ENCODE measurements at regions of chr11 and their contacts with region 1.

Region 1: DNA sequence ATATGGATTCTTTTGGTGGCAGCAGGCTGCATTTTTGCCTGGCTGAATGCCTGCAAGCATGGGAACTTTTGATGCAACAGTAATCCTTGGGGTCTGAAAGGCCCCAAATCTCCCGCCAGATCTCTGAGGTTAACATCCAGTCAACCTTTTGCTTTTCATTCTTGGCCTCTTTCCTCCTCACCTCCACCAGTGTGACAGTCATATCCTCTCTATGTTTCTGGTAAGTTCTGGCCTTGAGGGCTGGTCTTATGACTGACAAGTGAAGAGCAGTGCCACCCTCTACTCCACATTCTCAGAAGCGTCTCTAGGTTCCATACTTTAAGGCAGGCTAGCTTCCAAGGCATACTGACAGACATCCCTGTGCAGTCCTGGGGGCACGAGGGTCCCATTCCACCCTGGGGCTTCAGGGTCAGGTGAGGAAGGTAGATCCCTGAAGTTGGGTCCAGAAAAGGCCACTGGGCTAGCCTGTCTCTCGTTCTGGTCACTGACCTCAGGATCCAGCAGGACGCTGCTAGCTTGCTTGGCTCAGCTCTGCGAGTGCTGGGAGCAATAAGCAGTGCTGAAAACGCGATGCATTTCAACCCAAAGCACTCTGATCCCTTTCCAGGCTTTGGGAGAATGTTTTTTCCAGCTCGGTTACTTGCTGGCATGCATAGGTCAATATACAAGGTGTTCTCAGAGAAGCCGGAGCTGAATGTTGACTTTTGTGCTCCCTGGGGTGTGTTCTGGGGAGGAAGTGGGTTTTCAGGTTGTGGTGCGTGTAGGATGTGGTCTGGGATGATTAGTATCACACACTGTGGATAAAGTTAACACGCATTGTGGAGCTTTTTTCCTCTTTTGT is 75.2 kb downstream of the PTPRJ start:
- DNase-seq: peak; percentile 16 to 88 (median 52)
- ATAC-seq: peak; percentile 81
- H3K4me3 ChIP-seq: peak overlapping the region; percentile 36
- H3K4me3 Mint-ChIP-seq: peak overlapping the region; percentile 74
- H3K27ac ChIP-seq: peak overlapping the region in 1 of 2 donors; percentile 33
- H3K27ac Mint-ChIP-seq: peak overlapping the region; percentile 88
- H3K4me1 ChIP-seq: peaks cover 86% of the 10 kb centered on the region
- H3K4me1 Mint-ChIP-seq: peaks cover 91% of the 10 kb centered on the region
- H3K27me3 ChIP-seq: no peaks in the 10 kb centered on the region
- H3K27me3 Mint-ChIP-seq: no peaks in the 10 kb centered on the region
- CTCF ChIP-seq: no peak

Region 2: GRCh38 chr11:47932544-47932943 is 123.0 kb before region 1 on chr11:
- CTCF ChIA-PET with region 1: interaction called, 10 read pairs
- POLR2A ChIA-PET with region 1: interaction called, 10 read pairs
- intact Hi-C with region 1: loop called in 1 of 2 experiments (anchors 1 kb)
- DNase-seq: no peak
- ATAC-seq: no peak
- H3K4me3 ChIP-seq: no peak overlapping the region
- H3K4me3 Mint-ChIP-seq: no peak overlapping the region
- H3K27ac ChIP-seq: no peak overlapping the region
- H3K27ac Mint-ChIP-seq: no peak overlapping the region
- H3K4me1 ChIP-seq: peaks cover 12% of the 10 kb centered on the region
- H3K4me1 Mint-ChIP-seq: peaks cover 23% of the 10 kb centered on the region
- H3K27me3 ChIP-seq: no peaks in the 10 kb centered on the region
- H3K27me3 Mint-ChIP-seq: no peaks in the 10 kb centered on the region
- CTCF ChIP-seq: no peak

Region 3: GRCh38 chr11:47991266-47991830 is 64.2 kb before region 1 on chr11:
- CTCF ChIA-PET with region 1: no interaction called
- POLR2A ChIA-PET with region 1: interaction called, 10 read pairs
- intact Hi-C with region 1: no loop called
- DNase-seq: peak in 4 of 14 experiments; percentile 48 to 54 (median 52)
- ATAC-seq: peak; percentile 74
- H3K4me3 ChIP-seq: no peak overlapping the region
- H3K4me3 Mint-ChIP-seq: peak overlapping the region; percentile 46
- H3K27ac ChIP-seq: no peak overlapping the region
- H3K27ac Mint-ChIP-seq: peak overlapping the region; percentile 70
- H3K4me1 ChIP-seq: peaks cover 31% of the 10 kb centered on the region
- H3K4me1 Mint-ChIP-seq: peaks cover 68% of the 10 kb centered on the region
- H3K27me3 ChIP-seq: no peaks in the 10 kb centered on the region
- H3K27me3 Mint-ChIP-seq: no peaks in the 10 kb centered on the region
- CTCF ChIP-seq: no peak

Region 4: GRCh38 chr11:48013269-48013901 is 42.1 kb before region 1 on chr11:
- CTCF ChIA-PET with region 1: interaction called, 7 read pairs
- POLR2A ChIA-PET with region 1: interaction called, 29 read pairs
- intact Hi-C with region 1: loop called in 1 of 2 experiments (anchors 5 kb)
- DNase-seq: peak in 12 of 14 experiments; percentile 33 to 80 (median 50)
- ATAC-seq: peak; percentile 56
- H3K4me3 ChIP-seq: no peak overlapping the region
- H3K4me3 Mint-ChIP-seq: peak overlapping the region; percentile 79
- H3K27ac ChIP-seq: peak overlapping the region; percentile 61 to 88
- H3K27ac Mint-ChIP-seq: peak overlapping the region; percentile 97
- H3K4me1 ChIP-seq: peaks cover 100% of the 10 kb centered on the region
- H3K4me1 Mint-ChIP-seq: peaks cover 85% of the 10 kb centered on the region
- H3K27me3 ChIP-seq: no peaks in the 10 kb centered on the region
- H3K27me3 Mint-ChIP-seq: no peaks in the 10 kb centered on the region
- CTCF ChIP-seq: no peak

Region 5: DNA sequence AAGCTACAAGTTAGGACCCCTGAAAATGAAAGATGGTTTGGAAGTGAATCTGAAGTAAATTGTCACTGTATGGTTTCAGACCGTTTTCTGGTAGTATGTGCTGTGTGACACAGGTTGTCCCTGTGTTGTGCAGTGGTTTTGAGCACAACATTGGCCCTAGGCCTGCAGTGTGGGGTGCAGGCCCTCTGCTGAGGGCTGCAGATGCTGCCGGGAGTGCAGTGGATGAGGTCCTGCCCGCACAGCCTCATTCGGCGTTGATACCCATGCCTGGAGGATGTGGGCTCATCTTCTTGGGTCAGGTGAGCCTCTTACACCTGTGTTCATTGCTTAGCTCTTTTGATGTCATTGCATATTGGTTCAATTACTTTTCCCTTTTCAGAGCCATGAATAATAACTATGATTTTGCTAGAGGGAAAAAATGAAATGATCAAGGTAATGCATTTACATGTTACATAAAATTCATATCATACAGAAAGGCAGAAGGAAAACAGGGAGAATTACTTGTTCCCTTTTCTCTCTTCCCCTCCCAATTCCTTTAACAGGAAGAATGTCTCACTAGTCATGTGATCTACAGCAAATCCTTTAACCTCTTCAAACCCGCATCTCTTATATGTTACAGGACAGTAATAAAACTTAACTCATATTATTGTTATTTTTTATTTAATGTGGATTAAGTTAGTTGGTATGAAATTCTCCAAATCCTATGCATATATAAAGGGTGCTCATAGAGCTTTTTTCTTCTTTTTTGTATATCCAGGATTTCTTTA is 26.4 kb before region 1 on chr11:
- CTCF ChIA-PET with region 1: no interaction called
- POLR2A ChIA-PET with region 1: interaction called, 20 read pairs
- intact Hi-C with region 1: no loop called
- DNase-seq: peak in 6 of 14 experiments; percentile 26 to 78 (median 42)
- ATAC-seq: peak; percentile 82
- H3K4me3 ChIP-seq: no peak overlapping the region
- H3K4me3 Mint-ChIP-seq: no peak overlapping the region
- H3K27ac ChIP-seq: peak overlapping the region in 1 of 2 donors; percentile 22
- H3K27ac Mint-ChIP-seq: peak overlapping the region; percentile 83
- H3K4me1 ChIP-seq: peaks cover 35% of the 10 kb centered on the region
- H3K4me1 Mint-ChIP-seq: peaks cover 65% of the 10 kb centered on the region
- H3K27me3 ChIP-seq: no peaks in the 10 kb centered on the region
- H3K27me3 Mint-ChIP-seq: no peaks in the 10 kb centered on the region
- CTCF ChIP-seq: no peak

Region 6: GRCh38 chr11:48043111-48043990 is 12.2 kb before region 1 on chr11:
- CTCF ChIA-PET with region 1: interaction called, 5 read pairs
- POLR2A ChIA-PET with region 1: interaction called, 28 read pairs
- intact Hi-C with region 1: no loop called
- DNase-seq: peak in 2 of 14 experiments; percentile 7 to 50
- ATAC-seq: peak; percentile 77
- H3K4me3 ChIP-seq: no peak overlapping the region
- H3K4me3 Mint-ChIP-seq: peak overlapping the region; percentile 52
- H3K27ac ChIP-seq: no peak overlapping the region
- H3K27ac Mint-ChIP-seq: peak overlapping the region; percentile 84
- H3K4me1 ChIP-seq: peaks cover 29% of the 10 kb centered on the region
- H3K4me1 Mint-ChIP-seq: peaks cover 73% of the 10 kb centered on the region
- H3K27me3 ChIP-seq: no peaks in the 10 kb centered on the region
- H3K27me3 Mint-ChIP-seq: no peaks in the 10 kb centered on the region
- CTCF ChIP-seq: no peak

Region 7: GRCh38 chr11:48103621-48104562 is 48.4 kb after region 1 on chr11:
- CTCF ChIA-PET with region 1: interaction called, 6 read pairs
- POLR2A ChIA-PET with region 1: interaction called, 38 read pairs
- intact Hi-C with region 1: loop called (anchors 2 to 5 kb)
- DNase-seq: no peak
- ATAC-seq: no peak
- H3K4me3 ChIP-seq: no peak overlapping the region
- H3K4me3 Mint-ChIP-seq: no peak overlapping the region
- H3K27ac ChIP-seq: no peak overlapping the region
- H3K27ac Mint-ChIP-seq: peak overlapping the region; percentile 59
- H3K4me1 ChIP-seq: peaks cover 51% of the 10 kb centered on the region
- H3K4me1 Mint-ChIP-seq: peaks cover 71% of the 10 kb centered on the region
- H3K27me3 ChIP-seq: no peaks in the 10 kb centered on the region
- H3K27me3 Mint-ChIP-seq: no peaks in the 10 kb centered on the region
- CTCF ChIP-seq: no peak